Stomach (tissue), 19 donors: ENCODE measurements at regions of chr16 and their contacts with region 1.

Region 1: DNA sequence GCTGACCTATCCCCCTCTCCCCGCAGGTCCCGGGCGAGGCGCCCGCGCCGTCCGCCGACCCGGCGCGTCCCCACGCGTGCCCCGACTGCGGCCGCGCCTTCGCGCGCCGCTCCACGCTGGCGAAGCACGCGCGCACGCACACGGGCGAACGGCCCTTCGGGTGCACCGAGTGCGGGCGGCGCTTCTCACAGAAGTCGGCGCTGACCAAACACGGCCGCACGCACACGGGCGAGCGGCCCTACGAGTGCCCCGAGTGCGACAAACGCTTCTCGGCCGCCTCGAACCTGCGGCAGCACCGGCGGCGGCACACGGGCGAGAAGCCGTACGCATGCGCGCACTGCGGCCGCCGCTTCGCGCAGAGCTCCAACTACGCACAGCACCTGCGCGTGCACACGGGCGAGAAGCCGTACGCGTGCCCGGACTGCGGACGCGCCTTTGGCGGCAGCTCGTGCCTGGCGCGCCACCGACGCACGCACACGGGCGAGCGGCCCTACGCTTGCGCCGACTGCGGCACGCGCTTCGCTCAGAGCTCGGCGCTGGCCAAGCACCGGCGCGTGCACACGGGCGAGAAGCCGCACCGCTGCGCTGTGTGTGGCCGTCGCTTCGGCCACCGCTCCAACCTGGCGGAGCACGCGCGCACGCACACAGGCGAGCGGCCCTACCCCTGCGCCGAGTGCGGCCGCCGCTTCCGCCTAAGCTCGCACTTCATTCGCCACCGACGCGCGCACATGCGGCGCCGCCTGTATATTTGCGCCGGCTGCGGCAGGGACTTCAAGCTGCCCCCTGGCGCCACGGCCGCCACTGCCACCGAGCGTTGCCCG is 10.3 kb downstream of the ZNF771 start:
- DNase-seq: peak; percentile 90 to 98
- H3K4me3 ChIP-seq: peak overlapping the region; percentile 62 to 65 (median 64)
- H3K27ac ChIP-seq: peak overlapping the region; percentile 84 to 96 (median 94)
- H3K4me1 ChIP-seq: peaks cover 7 to 16% (median 16%) of the 10 kb centered on the region in 4 donors
- H3K27me3 ChIP-seq: no peaks in the 10 kb centered on the region
- CTCF ChIP-seq: peak in 1 of 7 experiments; percentile 39
- EP300 ChIP-seq: no peak
- POLR2A ChIP-seq: no peak

Region 2: GRCh38 chr16:30368122-30368791 is 49.5 kb before region 1 on chr16:
- intact Hi-C with region 1: loop called (anchors 10 kb)
- DNase-seq: peak in 1 of 2 donors; percentile 48
- H3K4me3 ChIP-seq: peak overlapping the region; percentile 86 to 98 (median 94)
- H3K27ac ChIP-seq: peak overlapping the region; percentile 34 to 97 (median 84)
- H3K4me1 ChIP-seq: peaks cover 33 to 64% (median 44%) of the 10 kb centered on the region in 4 donors
- H3K27me3 ChIP-seq: no peaks in the 10 kb centered on the region
- CTCF ChIP-seq: no peak
- EP300 ChIP-seq: no peak
- POLR2A ChIP-seq: no peak